MCF 10A (cell line): ENCODE measurements at regions of chr1 and their contacts with region 1.

Region 1: GRCh38 chr1:179142889-179143299 is 61.0 kb downstream of the TOR3A start:
- DNase-seq: peak; percentile 97
- H3K4me3 Mint-ChIP-seq: peak overlapping the region; percentile 72
- H3K27ac Mint-ChIP-seq: peak overlapping the region; percentile 79
- H3K4me1 Mint-ChIP-seq: peaks cover 38% of the 10 kb centered on the region
- H3K27me3 Mint-ChIP-seq: no peaks in the 10 kb centered on the region
- CTCF ChIP-seq: no peak

Region 2: GRCh38 chr1:179099891-179100290 is 43.0 kb before region 1 on chr1:
- CTCF ChIA-PET with region 1: no interaction called
- POLR2A ChIA-PET with region 1: no interaction called
- intact Hi-C with region 1: no loop called
- DNase-seq: no peak
- H3K4me3 Mint-ChIP-seq: no peak overlapping the region
- H3K27ac Mint-ChIP-seq: no peak overlapping the region
- H3K4me1 Mint-ChIP-seq: no peaks in the 10 kb centered on the region
- H3K27me3 Mint-ChIP-seq: no peaks in the 10 kb centered on the region
- CTCF ChIP-seq: no peak

Region 3: DNA sequence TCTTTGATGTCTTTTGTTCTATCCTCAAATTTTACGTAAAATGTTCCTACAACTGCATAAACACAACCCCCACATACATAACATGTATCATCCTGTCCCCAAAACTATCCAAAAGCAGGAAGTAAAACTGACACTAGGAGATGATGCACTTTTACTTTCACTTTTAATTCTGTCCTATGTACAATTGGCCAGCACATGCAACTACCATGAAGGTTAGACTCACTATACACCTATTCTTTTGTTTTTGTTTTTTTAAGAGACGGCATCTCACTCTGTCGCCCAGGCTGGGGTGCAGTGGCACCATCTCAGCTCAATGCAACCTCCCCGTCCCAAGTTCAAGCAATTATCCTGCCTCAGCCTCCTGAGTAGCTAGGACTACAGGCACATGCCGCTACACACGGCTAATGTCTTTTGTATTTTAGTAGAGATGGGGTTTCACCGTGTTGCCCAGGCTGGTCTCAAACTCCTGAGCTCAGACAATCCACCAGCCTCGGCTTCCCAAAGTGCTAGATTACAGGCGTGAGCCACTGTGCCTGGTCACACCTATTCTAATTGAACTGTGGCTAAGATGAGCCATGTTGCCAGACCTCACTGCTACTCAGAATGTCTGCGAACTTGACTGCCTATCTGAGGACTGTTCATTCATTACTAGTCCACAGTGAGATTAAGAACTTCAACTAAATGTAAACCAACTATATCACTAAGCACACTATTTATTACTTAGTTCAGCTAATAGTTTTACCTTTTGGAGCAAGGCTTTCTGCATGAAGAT is 13.0 kb before region 1 on chr1:
- CTCF ChIA-PET with region 1: interaction called, 8 read pairs
- POLR2A ChIA-PET with region 1: interaction called, 22 read pairs
- intact Hi-C with region 1: no loop called
- DNase-seq: peak; percentile 38
- H3K4me3 Mint-ChIP-seq: peak overlapping the region; percentile 58
- H3K27ac Mint-ChIP-seq: peak overlapping the region; percentile 72
- H3K4me1 Mint-ChIP-seq: peaks cover 48% of the 10 kb centered on the region
- H3K27me3 Mint-ChIP-seq: no peaks in the 10 kb centered on the region
- CTCF ChIP-seq: no peak

Region 4: DNA sequence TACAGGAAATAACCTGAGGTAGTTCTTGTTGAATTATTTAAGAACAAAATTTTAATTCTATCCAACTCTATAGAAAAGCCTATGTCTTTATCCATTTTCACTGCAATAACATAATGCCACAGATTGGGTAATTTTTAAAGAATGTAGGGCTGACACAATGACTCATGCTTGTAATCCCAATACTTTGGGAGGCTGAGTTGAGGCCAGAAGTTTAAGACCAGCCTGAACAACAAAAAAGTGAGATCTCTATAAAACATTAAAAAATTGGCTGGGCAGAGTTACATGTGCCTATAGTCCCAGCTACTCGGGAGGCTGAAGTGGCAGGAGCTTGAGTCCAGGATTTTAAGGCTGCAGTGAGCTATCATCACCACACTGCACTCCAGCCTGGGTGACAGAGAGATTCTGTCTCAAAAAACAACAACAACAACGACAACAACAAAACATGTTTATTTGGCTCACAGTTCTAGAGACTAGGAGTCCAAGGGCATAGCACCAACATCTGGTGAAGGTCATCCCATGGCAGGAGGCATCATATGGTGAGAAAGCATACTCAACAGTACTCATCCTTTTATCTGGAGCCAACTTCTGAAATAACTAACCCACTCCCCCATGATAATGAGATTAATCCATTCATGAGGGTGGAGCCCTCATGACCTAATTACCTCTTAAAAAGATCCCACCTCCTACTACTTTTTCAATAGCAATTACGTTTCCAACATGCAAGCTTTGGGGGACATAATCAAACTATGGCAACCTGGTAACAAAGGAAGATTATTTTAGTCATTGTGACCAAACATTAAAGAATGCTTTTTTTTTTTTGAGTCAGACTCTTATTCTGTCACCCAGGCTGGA is 26.9 kb after region 1 on chr1:
- CTCF ChIA-PET with region 1: interaction called, 3 read pairs
- POLR2A ChIA-PET with region 1: interaction called, 16 read pairs
- intact Hi-C with region 1: loop called (anchors 1 kb)
- DNase-seq: peak; percentile 83
- H3K4me3 Mint-ChIP-seq: no peak overlapping the region
- H3K27ac Mint-ChIP-seq: peak overlapping the region; percentile 62
- H3K4me1 Mint-ChIP-seq: peaks cover 17% of the 10 kb centered on the region
- H3K27me3 Mint-ChIP-seq: no peaks in the 10 kb centered on the region
- CTCF ChIP-seq: no peak

Region 5: GRCh38 chr1:179175011-179175841 is 32.3 kb after region 1 on chr1:
- CTCF ChIA-PET with region 1: interaction called, 3 read pairs
- POLR2A ChIA-PET with region 1: interaction called, 67 read pairs
- intact Hi-C with region 1: no loop called
- DNase-seq: peak; percentile 74
- H3K4me3 Mint-ChIP-seq: peak overlapping the region; percentile 21
- H3K27ac Mint-ChIP-seq: peak overlapping the region; percentile 84
- H3K4me1 Mint-ChIP-seq: peaks cover 24% of the 10 kb centered on the region
- H3K27me3 Mint-ChIP-seq: no peaks in the 10 kb centered on the region
- CTCF ChIP-seq: no peak

Region 6: DNA sequence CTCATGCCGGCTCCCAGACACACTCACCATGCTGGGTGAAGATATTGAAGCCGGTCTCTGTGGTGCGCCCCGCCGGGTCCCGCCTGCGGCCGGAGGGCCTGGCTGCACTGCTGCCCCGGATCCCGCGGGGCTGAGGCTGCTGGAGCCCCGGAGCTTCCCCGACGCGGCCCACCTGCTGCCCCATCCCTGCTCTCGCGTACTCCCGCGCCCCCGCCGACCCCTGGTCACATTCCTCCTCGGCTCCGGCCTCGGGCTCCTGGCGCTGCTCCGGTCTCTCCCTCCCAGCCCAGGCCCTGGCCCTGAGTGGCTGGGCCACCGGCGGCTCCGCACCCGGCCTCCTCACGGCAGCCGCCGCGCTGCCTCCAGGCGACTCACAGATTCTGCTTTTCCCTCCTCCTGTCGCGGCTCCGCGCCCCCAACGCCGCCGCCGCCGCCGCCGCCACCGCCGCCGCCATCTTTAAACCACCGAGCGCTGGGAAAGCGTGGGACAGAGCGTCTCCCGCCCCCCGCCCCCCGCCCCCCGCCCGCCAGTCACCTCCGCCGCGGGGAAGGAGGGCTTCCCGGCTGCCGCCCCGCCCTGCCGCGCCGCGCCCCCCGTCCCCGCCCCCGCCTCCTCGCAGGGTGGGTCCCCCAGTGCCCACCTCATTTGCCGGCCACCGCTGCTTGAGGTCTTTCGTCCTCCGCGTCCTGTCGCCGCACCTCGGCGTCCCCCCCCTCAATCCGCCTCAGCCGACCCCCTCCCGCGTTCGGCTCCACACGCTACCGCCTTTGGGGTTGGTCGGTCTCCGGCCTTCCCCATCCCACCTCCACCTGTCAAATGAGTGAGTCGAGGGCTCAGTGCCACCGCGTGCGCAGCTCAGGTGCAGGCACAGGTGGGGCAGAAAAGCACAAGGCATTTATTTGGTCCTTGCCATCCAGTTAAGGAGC is 86.6 kb after region 1 on chr1 and contains the start of gene ABL2:
- CTCF ChIA-PET with region 1: no interaction called
- POLR2A ChIA-PET with region 1: interaction called, 6 read pairs
- intact Hi-C with region 1: loop called (anchors 1 kb)
- DNase-seq: peak; percentile 49
- H3K4me3 Mint-ChIP-seq: peak within 1 kb of the TSS; percentile 80
- H3K27ac Mint-ChIP-seq: peak within 1 kb of the TSS; percentile 52
- H3K4me1 Mint-ChIP-seq: peaks cover 37% of the 10 kb centered on the region
- H3K27me3 Mint-ChIP-seq: no peaks in the 10 kb centered on the region
- CTCF ChIP-seq: no peak
- total RNA-seq, gene ABL2: 109 and 160 TPM in 2 replicates

Region 7: GRCh38 chr1:179293340-179294327 is 150.7 kb after region 1 on chr1 and contains the start of gene SOAT1:
- CTCF ChIA-PET with region 1: interaction called, 3 read pairs
- POLR2A ChIA-PET with region 1: interaction called, 12 read pairs
- intact Hi-C with region 1: loop called (anchors 2 kb)
- DNase-seq: peak; percentile 90
- H3K4me3 Mint-ChIP-seq: peak within 1 kb of the TSS; percentile 78
- H3K27ac Mint-ChIP-seq: peak within 1 kb of the TSS; percentile 68
- H3K4me1 Mint-ChIP-seq: peaks cover 29% of the 10 kb centered on the region
- H3K27me3 Mint-ChIP-seq: no peaks in the 10 kb centered on the region
- CTCF ChIP-seq: peak; percentile 16
- total RNA-seq, gene SOAT1: 28.4 and 39.7 TPM in 2 replicates